HepG2 (cell line): ENCODE measurements at regions of chr10 and their contacts with region 1.

Region 1: GRCh38 chr10:71889388-71889987 is 38.4 kb upstream of the PSAP start:
- DNase-seq: no peak
- ATAC-seq: no peak
- H3K4me3 ChIP-seq: peak overlapping the region in 1 of 3 experiments; percentile 69; a peak in 1 of 6 replicates
- H3K27ac ChIP-seq: no peak overlapping the region
- H3K4me1 ChIP-seq: peaks cover 46% of the 10 kb centered on the region
- H3K27me3 ChIP-seq: peaks cover 3 to 30% of the 10 kb centered on the region in 2 experiments; a peak in 4 of 5 replicates
- CTCF ChIP-seq: no peak
- EP300 ChIP-seq: no peak
- POLR2A ChIP-seq: no peak
- RAD21 ChIP-seq: no peak

Region 2: GRCh38 chr10:71835671-71836595 is 53.6 kb before region 1 on chr10:
- CTCF ChIA-PET with region 1: interaction called, 35 read pairs
- POLR2A ChIA-PET with region 1: no interaction called
- in situ Hi-C with region 1: no loop called
- intact Hi-C with region 1: no loop called
- DNase-seq: peak; percentile 42
- ATAC-seq: peak; percentile 49
- H3K4me3 ChIP-seq: no peak overlapping the region
- H3K27ac ChIP-seq: peak overlapping the region; percentile 34
- H3K4me1 ChIP-seq: peaks cover 36% of the 10 kb centered on the region
- H3K27me3 ChIP-seq: no peaks in the 10 kb centered on the region
- CTCF ChIP-seq: no peak
- EP300 ChIP-seq: no peak
- POLR2A ChIP-seq: no peak
- RAD21 ChIP-seq: no peak

Region 3: DNA sequence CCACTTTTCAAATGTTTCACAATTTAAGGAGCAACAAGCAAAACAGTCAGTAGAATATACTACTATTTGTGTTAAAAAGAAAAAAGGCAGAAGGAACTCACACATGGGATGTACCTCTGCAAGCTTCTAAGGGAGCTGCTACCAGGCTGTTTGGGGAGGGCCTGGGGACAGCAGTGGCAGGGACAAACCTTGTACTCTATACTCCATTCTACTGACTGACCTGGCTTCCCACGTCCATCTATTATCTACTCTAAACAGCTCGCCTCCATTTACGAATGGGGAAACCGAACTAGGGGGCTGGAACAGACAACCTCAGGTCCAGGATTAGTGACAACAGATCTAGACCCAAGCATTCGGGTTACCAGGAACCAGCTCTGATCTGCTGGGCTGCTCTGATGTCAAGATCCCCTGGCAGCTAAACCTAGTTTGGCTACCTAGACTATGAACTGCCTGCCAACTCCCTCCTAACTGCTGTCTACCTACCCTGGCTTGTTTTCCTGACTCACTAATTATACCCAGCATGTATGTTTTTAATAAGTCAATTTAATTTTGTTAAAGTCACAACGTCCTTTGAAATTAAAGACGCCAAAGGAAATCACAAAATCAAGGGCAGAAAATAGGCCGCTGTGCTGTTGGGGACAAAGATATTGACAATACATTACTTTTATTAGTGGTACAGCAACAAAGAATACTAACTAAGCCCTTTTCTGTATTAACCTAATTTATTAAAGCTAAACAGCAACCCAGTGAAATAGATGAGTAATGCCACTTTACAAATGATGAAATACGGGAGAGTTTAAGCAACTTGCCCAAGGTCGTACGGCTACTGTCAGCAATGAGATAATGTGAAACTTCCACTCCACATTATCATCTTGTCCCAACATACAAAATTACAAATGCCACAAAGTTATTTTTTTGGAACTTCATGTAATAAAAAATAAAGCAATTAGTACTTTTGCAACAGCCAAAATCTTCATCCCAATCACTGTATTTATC is 43.8 kb before region 1 on chr10:
- CTCF ChIA-PET with region 1: no interaction called
- POLR2A ChIA-PET with region 1: no interaction called
- in situ Hi-C with region 1: loop called (anchors 5 kb)
- intact Hi-C with region 1: no loop called
- DNase-seq: no peak
- ATAC-seq: 0 out of 3 replicates have a peak, but pooled peaks have one; percentile 25
- H3K4me3 ChIP-seq: no peak overlapping the region
- H3K27ac ChIP-seq: peak overlapping the region; percentile 16
- H3K4me1 ChIP-seq: peaks cover 48% of the 10 kb centered on the region
- H3K27me3 ChIP-seq: no peaks in the 10 kb centered on the region
- CTCF ChIP-seq: no peak
- EP300 ChIP-seq: no peak
- POLR2A ChIP-seq: no peak
- RAD21 ChIP-seq: no peak

Region 4: DNA sequence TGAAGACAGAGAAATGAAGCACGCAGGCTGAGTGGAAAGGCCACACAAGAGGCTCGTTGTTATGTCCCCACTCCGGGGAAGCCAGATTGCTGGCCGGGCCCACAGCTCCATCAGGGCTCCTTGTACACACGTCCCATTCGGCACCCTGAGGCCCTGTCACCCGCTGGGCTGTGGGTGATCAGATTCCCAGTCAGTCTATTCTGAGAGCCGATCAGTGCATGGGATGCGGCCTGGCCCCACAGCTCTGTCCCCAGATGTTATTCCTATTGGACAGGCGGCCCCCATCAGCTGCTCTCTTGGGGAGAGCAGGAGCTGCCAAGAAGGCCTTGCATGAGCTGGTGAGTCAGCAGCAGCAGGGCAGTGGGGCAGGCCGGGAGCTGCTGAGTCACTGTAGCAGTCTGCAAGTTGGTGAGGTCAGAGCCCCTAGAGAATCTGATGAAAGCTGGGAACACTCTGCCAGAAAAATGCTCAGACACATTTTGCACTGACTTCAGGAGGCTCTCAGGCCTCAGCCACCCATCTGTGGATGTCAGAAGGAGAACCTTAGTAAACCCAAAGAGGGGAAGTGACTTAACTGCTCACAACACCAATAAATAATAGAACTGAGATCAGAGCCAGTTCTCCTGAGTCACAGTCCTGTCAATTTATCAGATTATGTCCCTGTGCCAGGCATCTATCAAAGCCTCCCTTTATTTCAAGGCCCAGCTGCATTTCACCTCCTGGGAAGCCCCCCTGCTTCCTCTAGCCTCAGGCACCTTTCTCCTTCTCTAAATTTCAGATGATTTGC is 29.1 kb before region 1 on chr10:
- CTCF ChIA-PET with region 1: no interaction called
- POLR2A ChIA-PET with region 1: no interaction called
- in situ Hi-C with region 1: no loop called
- intact Hi-C with region 1: loop called (anchors 5 kb)
- DNase-seq: peak; percentile 85
- ATAC-seq: peak; percentile 97
- H3K4me3 ChIP-seq: peak overlapping the region; percentile 24 to 62 (median 45); a peak in 4 of 6 replicates
- H3K27ac ChIP-seq: peak overlapping the region; percentile 35
- H3K4me1 ChIP-seq: peaks cover 33% of the 10 kb centered on the region
- H3K27me3 ChIP-seq: peaks cover 0 to 3% of the 10 kb centered on the region in 2 experiments; a peak in 2 of 5 replicates
- CTCF ChIP-seq: no peak
- EP300 ChIP-seq: peak in 1 of 2 experiments; percentile 31; a peak in 1 of 4 replicates
- POLR2A ChIP-seq: peak in 1 of 2 experiments; percentile 48; a peak in 1 of 4 replicates
- RAD21 ChIP-seq: no peak

Region 5: GRCh38 chr10:72821606-72822005 is 932.1 kb after region 1 on chr10:
- CTCF ChIA-PET with region 1: no interaction called
- POLR2A ChIA-PET with region 1: no interaction called
- in situ Hi-C with region 1: no loop called
- intact Hi-C with region 1: no loop called
- DNase-seq: no peak
- ATAC-seq: no peak
- H3K4me3 ChIP-seq: no peak overlapping the region
- H3K27ac ChIP-seq: no peak overlapping the region
- H3K4me1 ChIP-seq: peaks cover 41% of the 10 kb centered on the region
- H3K27me3 ChIP-seq: no peaks in the 10 kb centered on the region
- CTCF ChIP-seq: no peak
- EP300 ChIP-seq: no peak
- POLR2A ChIP-seq: no peak
- RAD21 ChIP-seq: no peak